IMR-90 (cell line): ENCODE measurements at regions of chr3 and their contacts with region 1.

Region 1: DNA sequence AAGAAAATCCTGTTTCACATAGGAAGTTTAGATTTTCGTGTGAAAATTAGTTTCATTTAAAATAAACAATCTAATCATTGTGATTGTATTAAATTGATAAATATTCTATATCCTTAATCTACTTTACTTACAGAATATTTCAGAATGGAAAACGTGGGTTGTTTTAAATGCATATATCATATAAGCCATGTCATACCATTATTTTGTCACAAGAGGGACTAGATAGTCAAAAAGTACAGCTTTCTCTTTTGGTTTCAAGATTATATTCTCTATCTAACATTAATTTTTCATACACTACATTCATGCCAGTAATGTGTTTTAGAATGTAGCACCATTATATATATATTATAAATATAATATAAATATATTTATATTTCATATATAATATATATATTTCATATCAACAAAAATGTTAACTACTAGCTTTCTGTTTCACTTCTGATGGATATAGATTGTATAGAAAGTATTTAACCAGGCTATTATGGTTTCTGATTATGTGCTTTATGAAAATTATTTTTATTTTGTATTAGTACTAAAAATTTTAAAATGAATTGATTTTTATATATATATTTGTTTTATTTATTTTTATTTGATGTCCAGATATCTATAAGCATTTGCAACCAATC is 45.3 kb downstream of the OSTN start:
- DNase-seq: peak; percentile 35
- ATAC-seq: 0 out of 2 replicates have a peak, but pooled peaks have one; percentile 59
- H3K4me3 ChIP-seq: no peak overlapping the region
- H3K27ac ChIP-seq: no peak overlapping the region
- H3K4me1 ChIP-seq: peaks cover 2% of the 10 kb centered on the region; the same call in 1 of the 2 replicates
- H3K27me3 ChIP-seq: no peaks in the 10 kb centered on the region
- CTCF ChIP-seq: peak; percentile 59
- POLR2A ChIP-seq: no peak
- RAD21 ChIP-seq: peak; percentile 63

Region 2: GRCh38 chr3:191005790-191006189 is 238.6 kb before region 1 on chr3:
- CTCF ChIA-PET with region 1: no interaction called
- POLR2A ChIA-PET with region 1: no interaction called
- dilution Hi-C with region 1: no loop called
- in situ Hi-C with region 1: no loop called
- intact Hi-C with region 1: no loop called
- DNase-seq: no peak
- ATAC-seq: peak; percentile 70
- H3K4me3 ChIP-seq: no peak overlapping the region
- H3K27ac ChIP-seq: no peak overlapping the region
- H3K4me1 ChIP-seq: no peaks in the 10 kb centered on the region
- H3K27me3 ChIP-seq: no peaks in the 10 kb centered on the region
- CTCF ChIP-seq: no peak
- POLR2A ChIP-seq: no peak
- RAD21 ChIP-seq: no peak

Region 3: GRCh38 chr3:191336833-191337232 is 92.5 kb after region 1 on chr3:
- CTCF ChIA-PET with region 1: no interaction called
- POLR2A ChIA-PET with region 1: no interaction called
- dilution Hi-C with region 1: no loop called
- in situ Hi-C with region 1: no loop called
- intact Hi-C with region 1: no loop called
- DNase-seq: no peak
- ATAC-seq: no peak
- H3K4me3 ChIP-seq: no peak overlapping the region
- H3K27ac ChIP-seq: no peak overlapping the region
- H3K4me1 ChIP-seq: peaks cover 8% of the 10 kb centered on the region
- H3K27me3 ChIP-seq: no peaks in the 10 kb centered on the region
- CTCF ChIP-seq: no peak
- POLR2A ChIP-seq: no peak
- RAD21 ChIP-seq: no peak

Region 4: GRCh38 chr3:191376516-191377141 is 132.3 kb after region 1 on chr3:
- CTCF ChIA-PET with region 1: no interaction called
- POLR2A ChIA-PET with region 1: no interaction called
- dilution Hi-C with region 1: no loop called
- in situ Hi-C with region 1: loop called (anchors 10 kb)
- intact Hi-C with region 1: loop called (anchors 5 kb)
- DNase-seq: peak; percentile 81
- ATAC-seq: peak; percentile 89
- H3K4me3 ChIP-seq: no peak overlapping the region
- H3K27ac ChIP-seq: peak overlapping the region; percentile 51; the same call in 1 of the 2 replicates
- H3K4me1 ChIP-seq: peaks cover 11% of the 10 kb centered on the region
- H3K27me3 ChIP-seq: no peaks in the 10 kb centered on the region
- CTCF ChIP-seq: no peak
- POLR2A ChIP-seq: no peak
- RAD21 ChIP-seq: no peak

Region 5: GRCh38 chr3:191388823-191389222 is 144.5 kb after region 1 on chr3:
- CTCF ChIA-PET with region 1: no interaction called
- POLR2A ChIA-PET with region 1: no interaction called
- dilution Hi-C with region 1: no loop called
- in situ Hi-C with region 1: no loop called
- intact Hi-C with region 1: loop called (anchors 2 kb)
- DNase-seq: no peak
- ATAC-seq: no peak
- H3K4me3 ChIP-seq: no peak overlapping the region
- H3K27ac ChIP-seq: no peak overlapping the region
- H3K4me1 ChIP-seq: peaks cover 5% of the 10 kb centered on the region
- H3K27me3 ChIP-seq: no peaks in the 10 kb centered on the region
- CTCF ChIP-seq: peak; percentile 29; the same call in 1 of the 2 replicates
- POLR2A ChIP-seq: no peak
- RAD21 ChIP-seq: 0 out of 2 replicates have a peak, but pooled peaks have one; percentile 13

Region 6: GRCh38 chr3:191401775-191402357 is 157.5 kb after region 1 on chr3:
- CTCF ChIA-PET with region 1: no interaction called
- POLR2A ChIA-PET with region 1: no interaction called
- dilution Hi-C with region 1: no loop called
- in situ Hi-C with region 1: loop called (anchors 10 kb)
- intact Hi-C with region 1: no loop called
- DNase-seq: no peak
- ATAC-seq: no peak; the same call in 1 of the 2 replicates
- H3K4me3 ChIP-seq: no peak overlapping the region
- H3K27ac ChIP-seq: no peak overlapping the region
- H3K4me1 ChIP-seq: no peaks in the 10 kb centered on the region
- H3K27me3 ChIP-seq: no peaks in the 10 kb centered on the region
- CTCF ChIP-seq: no peak
- POLR2A ChIP-seq: no peak
- RAD21 ChIP-seq: no peak